Stomach (tissue), 19 donors: ENCODE measurements at regions of chr10 and their contacts with region 1.

Region 1: GRCh38 chr10:30398788-30399187 is 35.2 kb upstream of the MAP3K8 start:
- DNase-seq: no peak
- H3K4me3 ChIP-seq: no peak overlapping the region
- H3K27ac ChIP-seq: no peak overlapping the region
- H3K4me1 ChIP-seq: no peaks in the 10 kb centered on the region
- H3K27me3 ChIP-seq: no peaks in the 10 kb centered on the region
- CTCF ChIP-seq: no peak
- EP300 ChIP-seq: no peak
- POLR2A ChIP-seq: no peak

Region 2: GRCh38 chr10:30247704-30248103 is 151.1 kb before region 1 on chr10:
- intact Hi-C with region 1: no loop called
- DNase-seq: peak in 1 of 2 donors; percentile 19
- H3K4me3 ChIP-seq: no peak overlapping the region
- H3K27ac ChIP-seq: no peak overlapping the region
- H3K4me1 ChIP-seq: no peaks in the 10 kb centered on the region
- H3K27me3 ChIP-seq: no peaks in the 10 kb centered on the region
- CTCF ChIP-seq: no peak
- EP300 ChIP-seq: no peak
- POLR2A ChIP-seq: no peak

Region 3: GRCh38 chr10:30330497-30331168 is 68.2 kb before region 1 on chr10:
- intact Hi-C with region 1: no loop called
- DNase-seq: no peak
- H3K4me3 ChIP-seq: no peak overlapping the region
- H3K27ac ChIP-seq: no peak overlapping the region
- H3K4me1 ChIP-seq: no peaks in the 10 kb centered on the region
- H3K27me3 ChIP-seq: no peaks in the 10 kb centered on the region
- CTCF ChIP-seq: no peak
- EP300 ChIP-seq: no peak
- POLR2A ChIP-seq: no peak

Region 4: DNA sequence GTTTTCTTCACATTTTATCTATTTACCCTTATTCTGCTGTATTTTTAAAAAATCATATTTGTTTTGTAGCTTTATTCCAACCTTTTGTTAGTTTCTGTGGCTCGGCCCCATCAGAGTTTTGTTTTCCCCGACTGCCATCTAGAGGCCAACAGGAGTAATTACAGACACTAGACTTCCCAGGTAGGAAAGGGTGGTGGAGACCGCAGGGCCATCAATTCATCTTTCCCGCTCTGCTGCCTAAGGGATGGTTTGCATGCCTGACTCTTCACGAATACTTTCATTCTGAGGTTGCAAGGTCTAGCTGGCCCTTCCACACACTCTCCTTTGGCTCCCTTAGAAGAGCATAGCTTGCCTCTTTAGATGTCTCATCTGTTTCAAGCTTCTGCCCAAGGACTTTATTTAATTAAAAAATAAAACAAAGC is 192.5 kb after region 1 on chr10:
- intact Hi-C with region 1: loop called (anchors 5 kb)
- DNase-seq: peak in 1 of 2 donors; percentile 80
- H3K4me3 ChIP-seq: no peak overlapping the region
- H3K27ac ChIP-seq: no peak overlapping the region
- H3K4me1 ChIP-seq: peaks cover 0 to 17% (median 5%) of the 10 kb centered on the region in 4 donors
- H3K27me3 ChIP-seq: no peaks in the 10 kb centered on the region
- CTCF ChIP-seq: peak in 5 of 7 experiments; percentile 57 to 82 (median 78)
- EP300 ChIP-seq: no peak
- POLR2A ChIP-seq: no peak